ENCODE measurements at regions of chr13 and their contacts with region 1.

Region 1: GRCh38 chr13:49443704-49444523 is at the starts of genes CAB39L and SETDB2:
- DNase-seq: peak; percentile 97
- ATAC-seq: peak; percentile 89
- H3K4me3 Mint-ChIP-seq: peak within 1 kb of the TSS; percentile 92
- H3K27ac Mint-ChIP-seq: peak within 1 kb of the TSS; percentile 97
- H3K4me1 Mint-ChIP-seq: peaks cover 22% of the 10 kb centered on the region
- H3K27me3 Mint-ChIP-seq: peaks cover 6% of the 10 kb centered on the region
- total RNA-seq, gene CAB39L: 3.8 to 4.8 TPM
- total RNA-seq, gene SETDB2: 21.1 to 21.6 TPM

Region 2: DNA sequence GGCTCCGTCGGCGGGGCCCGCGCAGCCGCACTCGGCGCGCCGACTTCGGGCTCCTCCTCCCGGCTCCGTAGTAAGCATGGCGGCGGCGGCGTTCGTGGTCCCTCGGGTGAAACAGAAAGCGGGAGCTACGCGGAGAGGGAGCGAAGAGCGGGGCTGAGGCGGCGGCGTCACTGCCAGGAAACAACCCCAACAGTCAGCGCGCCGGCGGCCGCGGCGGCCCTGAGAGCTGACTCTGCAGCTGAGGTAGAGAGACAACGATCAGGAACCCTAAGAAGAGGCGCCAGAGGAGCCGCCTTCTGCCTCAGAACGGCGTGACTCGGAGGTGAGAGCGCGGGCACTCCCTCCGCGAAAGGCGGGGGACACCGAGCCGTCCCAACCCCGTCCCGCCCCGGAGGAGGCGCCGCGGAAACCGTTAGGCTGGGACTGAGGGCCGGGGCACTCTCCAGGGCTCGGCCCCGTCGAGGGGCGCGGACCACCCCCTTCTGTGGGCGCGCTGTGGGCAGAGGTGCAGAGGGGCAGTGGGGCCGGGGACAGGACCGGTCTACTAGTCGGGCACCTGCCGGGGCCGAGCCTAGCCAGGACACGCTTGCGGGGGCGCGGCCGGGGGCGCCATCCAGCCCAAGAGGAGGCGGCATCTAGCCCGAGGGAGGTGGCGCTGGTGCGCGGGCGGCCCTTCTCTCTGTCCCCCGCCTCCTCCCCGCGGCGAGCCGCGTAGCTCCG is 467.9 kb before region 1 on chr13 and contains the start of gene FNDC3A:
- POLR2A ChIA-PET with region 1: interaction called, 10 read pairs
- DNase-seq: peak; percentile 90
- ATAC-seq: peak; percentile 83
- H3K4me3 Mint-ChIP-seq: peak within 1 kb of the TSS; percentile 92
- H3K27ac Mint-ChIP-seq: peak within 1 kb of the TSS; percentile 98
- H3K4me1 Mint-ChIP-seq: peaks cover 31% of the 10 kb centered on the region
- H3K27me3 Mint-ChIP-seq: no peaks in the 10 kb centered on the region
- total RNA-seq, gene FNDC3A: 30.3 to 31.8 TPM

Region 3: DNA sequence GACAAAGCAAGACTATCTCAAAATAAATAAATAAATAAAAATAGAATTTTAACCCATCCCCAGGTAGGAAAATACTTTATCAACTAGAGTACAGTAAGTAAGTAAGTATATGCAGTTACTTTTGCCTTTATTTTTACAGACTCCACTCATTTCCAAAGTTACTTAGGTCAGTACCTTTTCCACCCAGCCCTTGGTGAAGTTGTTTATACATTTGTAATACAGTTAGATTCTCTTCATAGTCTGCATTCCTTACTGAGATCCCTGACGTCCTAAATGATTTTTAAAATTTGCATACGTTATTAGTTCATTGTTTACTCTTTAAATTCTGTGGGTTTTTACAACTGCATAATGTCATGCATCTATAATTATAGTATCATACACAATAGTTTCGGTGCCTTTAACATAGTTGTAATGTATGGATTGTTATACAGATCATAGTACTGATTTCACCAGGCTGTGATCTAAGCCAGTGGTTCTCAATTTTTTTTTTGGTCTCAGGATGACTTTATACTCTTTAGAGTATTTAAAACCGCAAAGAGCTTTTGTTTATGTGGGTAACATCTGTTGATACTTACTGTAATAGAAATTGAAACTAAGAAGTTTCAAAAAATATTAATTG is 10.6 kb after region 1 on chr13:
- POLR2A ChIA-PET with region 1: interaction called, 16 read pairs
- DNase-seq: no peak
- ATAC-seq: peak; percentile 50
- H3K4me3 Mint-ChIP-seq: peak overlapping the region; percentile 38
- H3K27ac Mint-ChIP-seq: no peak overlapping the region
- H3K4me1 Mint-ChIP-seq: peaks cover 19% of the 10 kb centered on the region
- H3K27me3 Mint-ChIP-seq: no peaks in the 10 kb centered on the region

Region 4: GRCh38 chr13:49476529-49476928 is 32.6 kb after region 1 on chr13:
- POLR2A ChIA-PET with region 1: no interaction called
- DNase-seq: no peak
- ATAC-seq: no peak
- H3K4me3 Mint-ChIP-seq: no peak overlapping the region
- H3K27ac Mint-ChIP-seq: no peak overlapping the region
- H3K4me1 Mint-ChIP-seq: no peaks in the 10 kb centered on the region
- H3K27me3 Mint-ChIP-seq: no peaks in the 10 kb centered on the region

Region 5: DNA sequence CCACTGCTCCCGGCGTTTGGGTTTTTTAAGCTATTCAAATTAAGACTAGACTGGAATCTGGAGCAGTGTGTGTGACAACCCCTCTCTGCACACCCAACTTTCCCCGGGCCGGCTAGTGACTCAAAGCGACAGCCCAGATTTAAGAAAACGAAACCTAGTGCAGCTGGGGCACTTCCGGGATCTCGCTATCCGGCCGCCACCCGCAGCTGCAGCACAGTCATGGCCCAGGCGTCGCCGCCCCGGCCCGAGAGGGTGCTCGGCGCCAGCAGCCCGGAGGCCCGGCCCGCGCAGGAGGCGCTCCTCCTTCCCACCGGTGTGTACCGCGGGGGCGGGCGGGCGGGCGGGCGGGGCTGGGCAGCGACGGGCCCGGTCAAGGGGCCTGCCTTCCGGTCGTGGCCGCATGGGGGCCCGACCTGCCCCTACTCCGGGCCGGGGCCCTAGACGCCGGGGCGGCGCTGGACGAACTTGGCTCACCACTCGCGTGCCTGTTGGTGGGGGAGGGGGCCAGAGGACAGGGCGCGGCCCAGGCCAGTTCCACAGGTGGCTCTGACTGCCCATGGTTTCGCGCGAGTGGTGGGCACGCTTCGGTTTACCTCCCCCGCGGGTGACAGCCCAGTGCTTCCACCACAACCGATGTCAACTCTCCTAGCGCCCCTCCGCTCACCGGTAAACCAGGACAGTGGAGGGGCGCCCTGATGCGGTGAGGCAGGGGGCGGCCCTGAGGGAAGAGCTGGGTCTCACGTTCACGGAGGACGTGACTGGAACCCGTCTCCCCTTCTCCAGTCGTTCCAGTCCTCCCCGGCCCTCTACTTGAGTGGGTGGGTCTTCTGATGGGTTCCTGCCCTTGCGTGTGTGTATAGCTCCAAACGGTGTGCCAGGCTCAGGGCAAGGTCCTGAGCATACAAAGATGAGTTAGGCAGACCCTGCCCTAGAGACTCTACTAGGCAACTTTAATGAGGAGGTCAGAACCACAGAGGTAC is 52.2 kb after region 1 on chr13 and contains the start of gene PHF11:
- POLR2A ChIA-PET with region 1: interaction called, 119 read pairs
- DNase-seq: peak; percentile 86
- ATAC-seq: peak; percentile 85
- H3K4me3 Mint-ChIP-seq: peak within 1 kb of the TSS; percentile 98
- H3K27ac Mint-ChIP-seq: peak within 1 kb of the TSS; percentile 100
- H3K4me1 Mint-ChIP-seq: peaks cover 51% of the 10 kb centered on the region
- H3K27me3 Mint-ChIP-seq: no peaks in the 10 kb centered on the region
- total RNA-seq, gene PHF11: 121 to 123 TPM

Region 6: DNA sequence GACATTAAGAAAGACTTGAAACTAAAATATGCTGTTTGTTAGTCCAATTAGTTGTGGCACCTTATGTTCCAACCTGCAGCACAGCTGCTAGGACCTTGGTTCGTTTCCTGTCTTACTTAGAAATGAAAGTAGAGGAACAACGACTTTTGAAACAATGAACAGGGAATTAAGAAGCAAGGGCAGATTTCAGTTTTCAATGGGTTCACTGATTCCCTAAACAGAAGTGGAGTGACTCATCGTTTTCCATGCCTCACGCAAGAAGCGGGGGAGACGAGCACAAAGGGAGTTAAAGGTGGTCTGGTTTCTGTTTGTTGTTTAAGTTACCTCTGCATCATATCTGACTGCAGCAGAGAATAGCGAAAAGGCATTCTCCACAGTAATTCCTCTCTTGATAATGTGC is 96.6 kb after region 1 on chr13:
- POLR2A ChIA-PET with region 1: interaction called, 14 read pairs
- DNase-seq: no peak
- ATAC-seq: peak; percentile 63
- H3K4me3 Mint-ChIP-seq: peak overlapping the region; percentile 76
- H3K27ac Mint-ChIP-seq: peak overlapping the region; percentile 88
- H3K4me1 Mint-ChIP-seq: peaks cover 20% of the 10 kb centered on the region
- H3K27me3 Mint-ChIP-seq: no peaks in the 10 kb centered on the region

Region 7: DNA sequence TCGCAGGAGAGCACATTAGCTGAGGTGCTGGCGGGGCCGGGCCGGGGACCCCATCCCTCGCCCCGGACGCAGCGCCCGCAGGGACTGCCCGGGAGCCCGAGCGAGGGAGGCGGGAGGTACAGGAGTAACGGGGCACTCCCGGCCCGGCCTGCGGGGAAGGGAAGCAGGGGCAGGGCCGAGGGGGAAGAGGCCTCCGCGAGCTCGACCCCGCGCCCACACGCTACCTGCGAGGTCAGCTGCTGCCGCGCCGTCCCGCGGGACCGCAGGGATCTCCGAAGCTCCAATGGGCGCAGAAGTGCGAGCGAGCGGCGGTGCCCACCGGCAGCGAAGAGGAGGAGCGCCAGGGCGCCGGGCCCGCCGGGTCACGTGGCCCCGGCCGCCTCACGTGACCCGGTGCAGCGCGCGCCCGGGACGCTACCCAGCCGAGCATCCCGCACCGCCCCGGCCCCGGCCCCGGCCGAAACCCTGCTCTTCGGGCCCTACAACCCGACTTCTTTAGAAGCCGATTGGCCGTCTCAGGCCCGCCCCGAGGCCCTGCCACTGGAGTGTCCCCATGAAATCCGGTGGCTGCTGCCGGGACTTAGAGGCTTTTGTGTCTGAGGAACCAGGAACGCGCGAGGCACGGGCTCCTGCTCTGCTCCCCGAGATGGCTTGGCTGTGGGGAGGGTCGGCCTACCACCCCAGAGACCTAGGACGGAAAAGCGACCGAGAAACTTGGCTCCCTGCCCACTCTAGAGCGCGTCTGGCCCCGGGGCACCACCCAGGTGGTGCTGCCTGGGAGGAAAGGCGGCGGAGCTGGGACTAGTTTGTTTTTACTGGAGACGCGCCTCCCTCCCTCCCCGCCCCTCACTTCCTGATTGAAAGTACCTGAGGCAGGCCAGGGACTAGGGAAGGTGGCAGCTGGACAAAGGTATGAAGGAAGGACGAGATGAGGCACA is 141.6 kb after region 1 on chr13 and contains the start of gene RCBTB1:
- POLR2A ChIA-PET with region 1: interaction called, 16 read pairs
- DNase-seq: peak; percentile 83
- ATAC-seq: peak; percentile 96
- H3K4me3 Mint-ChIP-seq: peak within 1 kb of the TSS; percentile 97
- H3K27ac Mint-ChIP-seq: peak within 1 kb of the TSS; percentile 93
- H3K4me1 Mint-ChIP-seq: peaks cover 36% of the 10 kb centered on the region
- H3K27me3 Mint-ChIP-seq: peaks cover 3% of the 10 kb centered on the region
- total RNA-seq, gene RCBTB1: 18.9 to 20.6 TPM

Region 8: DNA sequence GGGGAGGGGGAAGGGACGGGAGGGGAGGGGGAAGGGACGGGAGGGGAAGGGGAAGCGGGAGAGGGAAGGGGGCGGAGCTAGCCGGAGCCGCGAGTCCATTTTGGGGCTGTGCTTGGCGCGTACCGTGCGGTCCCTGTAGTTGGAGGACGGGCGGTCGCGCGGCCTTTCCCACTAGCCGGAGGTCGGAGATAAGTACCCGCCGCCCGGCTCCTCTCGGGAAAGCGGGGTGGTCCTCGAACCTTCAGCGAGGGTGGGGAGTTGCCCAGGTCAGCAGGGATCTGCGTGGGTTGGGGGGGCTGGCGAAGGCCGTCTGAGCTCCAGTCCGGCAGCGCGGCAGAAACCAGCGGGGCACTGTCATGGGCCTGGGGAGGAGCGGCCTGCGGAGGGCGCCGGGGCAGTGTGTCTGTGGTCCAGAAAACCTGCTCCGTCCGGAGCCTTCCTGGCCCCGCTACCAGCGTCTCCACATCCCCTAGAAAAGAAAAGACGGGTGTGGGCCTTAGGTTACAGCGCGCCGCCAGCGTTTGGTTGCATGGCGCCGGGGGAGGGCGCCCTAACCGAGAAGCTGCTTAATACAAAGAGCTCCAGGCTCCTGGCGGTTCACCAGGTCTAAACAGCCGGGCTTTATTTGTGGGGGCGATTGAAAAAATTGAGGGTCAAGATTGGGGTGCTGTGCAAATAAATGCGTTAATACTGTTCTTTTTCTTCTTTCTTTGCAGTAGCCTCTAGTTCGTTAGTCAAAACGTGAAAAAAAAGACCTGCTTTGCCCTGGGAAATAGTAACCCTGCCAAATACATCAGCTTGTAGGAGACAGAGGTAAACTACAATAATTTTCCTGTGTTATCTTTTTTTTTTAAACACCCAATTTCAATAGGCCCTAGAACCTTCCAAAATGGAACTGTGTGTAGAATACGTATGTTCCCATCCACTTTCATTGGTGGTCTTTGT is 553.3 kb after region 1 on chr13 and contains the start of gene TRIM13:
- POLR2A ChIA-PET with region 1: interaction called, 10 read pairs
- DNase-seq: peak; percentile 86
- ATAC-seq: peak; percentile 87
- H3K4me3 Mint-ChIP-seq: peak within 1 kb of the TSS; percentile 94
- H3K27ac Mint-ChIP-seq: peak within 1 kb of the TSS; percentile 89
- H3K4me1 Mint-ChIP-seq: peaks cover 22% of the 10 kb centered on the region
- H3K27me3 Mint-ChIP-seq: no peaks in the 10 kb centered on the region
- total RNA-seq, gene TRIM13: 19.7 to 19.9 TPM

Measured in activated naive CD8-positive, alpha-beta T cell treated with anti-CD3 and anti-CD28 coated beads, Interleukin-2, amount 10 ng/mL, durations not matched to agents 7 days and 5 days (primary cell).